ENCODE measurements at regions of chr12 and their contacts with region 1.

Region 1: DNA sequence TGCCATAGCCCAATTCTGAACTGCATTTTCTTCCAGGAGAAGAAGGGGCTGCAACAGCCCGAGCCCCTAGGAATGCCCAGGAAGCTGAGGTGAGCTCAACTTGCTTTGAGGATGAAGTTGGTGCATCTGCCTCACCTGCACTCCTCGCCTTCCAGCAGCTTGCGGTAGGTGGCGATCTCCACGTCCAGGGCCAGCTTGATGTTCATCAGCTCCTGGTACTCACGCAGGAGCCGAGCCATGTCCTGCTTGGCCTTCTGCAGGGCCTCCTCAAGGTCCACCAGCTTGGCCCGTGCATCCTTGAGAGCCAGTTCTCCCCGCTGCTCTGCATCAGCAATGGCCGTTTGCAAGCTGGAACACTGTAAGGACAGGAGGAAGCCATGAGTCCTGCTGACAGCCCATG is 6.0 kb downstream of the KRT75 start:
- DNase-seq: no peak
- H3K4me3 ChIP-seq: no peak overlapping the region
- H3K4me3 Mint-ChIP-seq: no peak overlapping the region
- H3K27ac Mint-ChIP-seq: no peak overlapping the region
- H3K4me1 ChIP-seq: peaks cover 6% of the 10 kb centered on the region; the same call in 1 of the 2 replicates
- H3K4me1 Mint-ChIP-seq: peaks cover 6% of the 10 kb centered on the region
- H3K27me3 ChIP-seq: no peaks in the 10 kb centered on the region
- H3K27me3 Mint-ChIP-seq: peaks cover 9% of the 10 kb centered on the region
- CTCF ChIP-seq: no peak

Region 2: DNA sequence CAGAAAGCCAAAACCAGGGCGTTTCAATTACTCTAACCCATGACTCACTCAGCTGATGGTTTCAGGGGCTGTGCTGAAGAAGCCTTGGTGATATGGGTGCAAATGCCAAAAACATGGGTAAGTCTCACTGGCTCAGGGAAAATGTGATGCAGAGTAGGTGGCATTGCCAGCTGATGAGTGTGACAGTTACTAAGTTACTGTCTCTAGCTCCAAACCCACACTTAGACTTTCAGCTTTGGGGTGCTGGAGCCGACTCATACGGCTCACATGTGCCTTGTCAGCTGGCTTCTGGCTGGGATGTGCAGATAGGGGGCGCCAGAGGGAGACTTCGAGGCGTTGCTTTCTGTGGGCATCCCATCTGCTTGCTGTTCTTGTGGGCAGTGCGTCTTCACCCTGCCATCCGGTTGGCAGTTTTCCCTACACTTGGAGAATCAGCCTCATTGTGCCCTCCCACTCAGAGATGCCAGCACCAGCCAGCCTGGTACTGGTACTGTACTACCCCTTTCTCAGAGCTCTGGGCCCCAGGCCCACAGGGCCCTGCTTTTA is 206.1 kb before region 1 on chr12:
- CTCF ChIA-PET with region 1: no interaction called
- POLR2A ChIA-PET with region 1: no interaction called
- intact Hi-C with region 1: no loop called
- DNase-seq: peak in 1 of 2 experiments; percentile 48
- H3K4me3 ChIP-seq: no peak overlapping the region
- H3K4me3 Mint-ChIP-seq: no peak overlapping the region
- H3K27ac Mint-ChIP-seq: no peak overlapping the region
- H3K4me1 ChIP-seq: peaks cover 31% of the 10 kb centered on the region
- H3K4me1 Mint-ChIP-seq: peaks cover 26% of the 10 kb centered on the region
- H3K27me3 ChIP-seq: no peaks in the 10 kb centered on the region
- H3K27me3 Mint-ChIP-seq: no peaks in the 10 kb centered on the region
- CTCF ChIP-seq: peak; percentile 34

Region 3: DNA sequence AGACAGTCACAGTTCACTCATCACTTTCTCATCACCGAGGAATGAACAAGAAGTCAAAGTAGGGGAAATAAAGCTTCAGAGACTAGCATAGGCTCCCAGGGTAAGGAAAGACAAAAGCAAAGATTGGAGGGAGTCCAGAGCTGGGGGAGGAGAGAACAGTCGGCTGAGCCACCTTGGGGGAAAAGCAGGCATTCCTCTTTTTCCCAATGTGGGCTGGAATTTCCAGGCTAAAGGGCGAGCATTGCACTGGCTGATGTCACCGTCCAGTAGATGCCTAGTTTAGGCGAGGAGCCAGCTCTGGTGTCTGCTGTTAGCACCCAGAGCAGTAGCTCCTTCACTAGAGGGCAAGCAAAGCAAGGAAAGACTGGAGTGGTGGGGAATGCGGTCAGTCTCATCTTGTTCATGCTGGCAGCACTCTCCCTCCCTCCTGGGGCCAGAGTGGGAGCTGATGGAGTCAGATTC is 14.5 kb after region 1 on chr12:
- CTCF ChIA-PET with region 1: interaction called, 11 read pairs
- POLR2A ChIA-PET with region 1: no interaction called
- intact Hi-C with region 1: no loop called
- DNase-seq: peak; percentile 34 to 65
- H3K4me3 ChIP-seq: no peak overlapping the region
- H3K4me3 Mint-ChIP-seq: no peak overlapping the region
- H3K27ac Mint-ChIP-seq: peak overlapping the region; percentile 87
- H3K4me1 ChIP-seq: peaks cover 37% of the 10 kb centered on the region
- H3K4me1 Mint-ChIP-seq: peaks cover 28% of the 10 kb centered on the region
- H3K27me3 ChIP-seq: no peaks in the 10 kb centered on the region
- H3K27me3 Mint-ChIP-seq: no peaks in the 10 kb centered on the region
- CTCF ChIP-seq: no peak